Heart left ventricle (tissue), 16 donors: ENCODE measurements at regions of chr10 and their contacts with region 1.

Region 1: GRCh38 chr10:74651565-74651964 is 174.8 kb upstream of the KAT6B start:
- DNase-seq: no peak
- ATAC-seq: no peak
- H3K4me3 ChIP-seq: no peak overlapping the region
- H3K27ac ChIP-seq: no peak overlapping the region
- H3K4me1 ChIP-seq: peaks cover 0 to 7% (median 0%) of the 10 kb centered on the region in 12 donors
- H3K27me3 ChIP-seq: no peaks in the 10 kb centered on the region
- CTCF ChIP-seq: no peak
- POLR2A ChIP-seq: no peak

Region 2: DNA sequence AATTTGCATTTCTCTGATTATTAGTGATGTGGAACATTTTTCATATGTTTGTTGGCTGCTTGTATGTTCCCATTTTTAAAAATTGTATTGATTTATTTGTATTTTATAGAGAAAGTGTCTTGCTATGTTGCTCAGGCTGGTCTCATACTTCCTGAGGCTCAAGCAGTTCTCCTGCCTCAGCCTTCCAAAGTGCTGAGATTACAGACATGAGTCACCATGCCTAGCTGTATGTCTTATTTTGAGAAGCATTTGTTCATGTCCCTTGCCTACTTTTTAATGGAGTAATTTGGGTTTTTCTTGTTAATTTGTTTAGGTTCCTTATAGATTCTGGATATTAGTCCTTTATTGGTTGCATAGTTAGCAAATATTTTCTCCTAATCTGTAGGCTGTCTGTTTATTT is 39.4 kb before region 1 on chr10:
- intact Hi-C with region 1: loop called in 1 of 10 experiments (anchors 5 kb)
- DNase-seq: no peak
- ATAC-seq: no peak
- H3K4me3 ChIP-seq: no peak overlapping the region
- H3K27ac ChIP-seq: no peak overlapping the region
- H3K4me1 ChIP-seq: no peaks in the 10 kb centered on the region
- H3K27me3 ChIP-seq: no peaks in the 10 kb centered on the region
- CTCF ChIP-seq: no peak
- POLR2A ChIP-seq: no peak